BJ (cell line): ENCODE measurements at regions of chr20 and their contacts with region 1.

Region 1: GRCh38 chr20:38412877-38413577 is 22.1 kb downstream of the SNHG17 start:
- DNase-seq: no peak
- H3K4me3 ChIP-seq: no peak overlapping the region
- H3K27me3 ChIP-seq: no peaks in the 10 kb centered on the region
- CTCF ChIP-seq: no peak

Region 2: GRCh38 chr20:38260378-38261053 is 152.5 kb before region 1 on chr20 and contains the start of gene KIAA1755:
- CTCF ChIA-PET with region 1: no interaction called
- POLR2A ChIA-PET with region 1: no interaction called
- DNase-seq: no peak
- H3K4me3 ChIP-seq: peak within 1 kb of the TSS; percentile 56
- H3K27me3 ChIP-seq: no peaks in the 10 kb centered on the region
- CTCF ChIP-seq: no peak
- polyA plus RNA-seq, gene KIAA1755: 5.3 and 9.7 TPM in 2 replicates

Region 3: DNA sequence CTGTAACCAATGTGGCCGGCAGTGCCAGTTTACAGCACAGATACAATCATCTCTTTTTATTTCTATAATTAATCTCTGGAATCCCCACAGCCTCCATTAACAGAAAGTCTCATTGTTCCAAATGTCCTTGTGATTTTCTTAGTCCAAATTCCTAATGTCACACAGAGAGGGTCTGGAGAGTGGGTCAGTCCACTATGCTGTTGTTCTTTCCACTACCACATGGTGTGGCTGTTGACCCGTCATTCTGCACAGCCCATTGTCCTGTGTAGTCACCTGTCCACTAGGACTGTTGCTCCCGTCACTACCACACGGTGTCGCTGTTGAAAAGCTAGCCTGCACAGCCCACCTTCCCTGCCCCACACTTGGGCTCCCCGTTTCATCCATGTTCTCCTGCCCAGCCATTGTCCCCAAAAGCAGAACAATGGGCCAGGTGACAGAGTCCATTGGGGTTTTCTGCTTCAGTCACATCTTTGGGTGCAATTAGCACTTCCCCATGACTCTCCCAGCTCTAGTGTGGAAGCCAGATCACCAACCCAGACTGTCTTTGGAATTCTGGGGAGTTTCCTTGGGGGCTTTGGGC is 75.4 kb before region 1 on chr20:
- CTCF ChIA-PET with region 1: interaction called, 16 read pairs
- POLR2A ChIA-PET with region 1: no interaction called
- DNase-seq: no peak
- H3K4me3 ChIP-seq: no peak overlapping the region
- H3K27me3 ChIP-seq: peaks cover 13% of the 10 kb centered on the region
- CTCF ChIP-seq: peak; percentile 27; the same call in 1 of the 2 replicates

Region 4: GRCh38 chr20:38357653-38358207 is 55.3 kb before region 1 on chr20:
- CTCF ChIA-PET with region 1: interaction called, 11 read pairs
- POLR2A ChIA-PET with region 1: no interaction called
- DNase-seq: no peak
- H3K4me3 ChIP-seq: no peak overlapping the region
- H3K27me3 ChIP-seq: peaks cover 3% of the 10 kb centered on the region; the same call in 1 of the 2 replicates
- CTCF ChIP-seq: no peak

Region 5: DNA sequence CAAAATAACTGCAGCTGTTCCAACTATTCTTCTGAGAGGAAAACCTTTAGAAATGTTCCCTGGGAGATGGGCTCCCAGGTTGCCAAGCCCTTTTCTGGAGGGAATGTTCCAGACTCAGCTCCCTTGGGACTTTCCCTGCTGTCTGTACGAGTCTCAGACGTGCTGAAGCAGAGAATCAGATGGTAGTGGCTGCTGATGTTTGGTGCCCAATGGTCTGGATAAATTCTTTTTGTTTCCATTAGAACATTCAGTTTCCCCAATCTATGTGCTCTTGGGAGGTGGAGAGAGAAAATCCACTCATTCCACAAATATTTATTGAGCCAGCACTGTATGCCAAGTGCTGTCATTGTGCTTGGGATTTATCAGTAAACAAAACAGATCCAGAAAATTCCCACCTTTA is 17.9 kb before region 1 on chr20:
- CTCF ChIA-PET with region 1: interaction called, 16 read pairs
- POLR2A ChIA-PET with region 1: no interaction called
- DNase-seq: no peak
- H3K4me3 ChIP-seq: no peak overlapping the region
- H3K27me3 ChIP-seq: peaks cover 7% of the 10 kb centered on the region
- CTCF ChIP-seq: no peak

Region 6: DNA sequence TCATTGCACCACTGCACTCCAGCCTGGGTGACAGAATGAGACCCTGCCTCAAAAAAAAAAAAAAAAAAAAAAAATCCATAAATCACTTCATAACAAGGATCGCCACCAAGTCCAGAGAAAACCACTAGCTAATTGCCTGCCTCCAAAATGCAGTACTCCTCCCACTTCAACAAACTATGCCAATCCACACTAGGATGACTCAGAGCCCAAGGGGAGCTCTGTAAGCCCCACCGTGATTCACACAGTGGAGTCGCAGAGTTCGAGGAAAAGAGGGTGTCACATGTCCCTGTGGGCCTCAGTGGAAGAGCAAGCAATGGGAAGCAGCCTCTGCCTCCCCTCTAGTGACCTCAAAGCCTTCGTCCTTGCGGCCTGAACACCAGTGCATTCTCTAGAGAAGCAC is 13.0 kb after region 1 on chr20:
- CTCF ChIA-PET with region 1: interaction called, 10 read pairs
- POLR2A ChIA-PET with region 1: interaction called, 4 read pairs
- DNase-seq: peak; percentile 73
- H3K4me3 ChIP-seq: no peak overlapping the region
- H3K27me3 ChIP-seq: no peaks in the 10 kb centered on the region
- CTCF ChIP-seq: no peak

Region 7: GRCh38 chr20:38477747-38478146 is 64.7 kb after region 1 on chr20:
- CTCF ChIA-PET with region 1: no interaction called
- POLR2A ChIA-PET with region 1: no interaction called
- DNase-seq: no peak
- H3K4me3 ChIP-seq: no peak overlapping the region
- H3K27me3 ChIP-seq: no peaks in the 10 kb centered on the region
- CTCF ChIP-seq: no peak